ENCODE measurements at regions of chr17 and their contacts with region 1.

Region 1: GRCh38 chr17:66633317-66633965 is 201.5 kb upstream of the CACNG5 start:
- DNase-seq: peak; percentile 78
- H3K4me3 Mint-ChIP-seq: no peak overlapping the region
- H3K27ac Mint-ChIP-seq: peak overlapping the region; percentile 44
- H3K4me1 Mint-ChIP-seq: peaks cover 62% of the 10 kb centered on the region
- H3K27me3 Mint-ChIP-seq: no peaks in the 10 kb centered on the region

Region 2: DNA sequence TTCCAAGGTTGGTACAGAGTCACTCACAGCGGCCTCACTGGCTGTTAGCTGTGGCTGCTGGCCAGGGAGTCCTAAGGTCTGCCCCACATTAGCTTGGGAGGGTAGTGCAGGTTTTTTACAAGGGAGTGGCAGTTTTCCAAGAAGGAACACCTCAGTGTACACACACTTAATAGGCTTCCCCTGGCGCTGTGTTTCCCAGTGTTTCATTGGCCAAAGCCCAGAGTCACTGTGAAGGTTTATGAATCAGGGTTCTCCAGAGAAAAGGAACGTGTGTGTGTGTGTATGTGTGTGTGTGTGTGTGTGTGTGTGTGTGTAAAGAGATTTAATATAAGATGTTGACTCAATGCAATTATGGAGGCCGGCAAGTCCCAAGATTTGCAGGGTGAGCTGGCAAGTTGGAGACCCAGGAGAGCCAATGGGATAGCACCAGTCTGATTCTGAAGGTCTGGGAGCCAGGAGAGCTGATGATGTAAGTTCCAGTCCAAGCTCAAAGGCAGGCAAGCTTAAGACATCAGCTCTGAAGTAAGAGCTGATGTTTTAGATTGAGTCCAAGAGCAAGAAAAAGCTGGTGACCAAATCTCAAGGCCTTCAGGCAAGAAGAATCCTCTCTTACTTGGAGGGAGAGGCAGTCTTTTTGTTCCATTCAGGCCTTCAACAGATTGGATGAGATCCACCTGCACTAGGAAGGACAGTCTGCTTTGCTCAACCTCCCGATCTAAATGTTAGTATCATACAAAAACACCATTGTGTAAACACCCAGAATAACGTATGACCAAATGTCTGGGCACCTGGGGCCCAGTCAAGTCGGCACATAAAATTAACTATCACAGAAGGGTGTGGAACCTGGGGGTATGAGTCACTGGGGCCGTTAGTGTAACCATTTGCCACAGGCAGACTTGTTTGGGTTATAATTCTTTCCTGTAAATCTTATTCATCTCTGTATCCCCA is 124.3 kb before region 1 on chr17:
- CTCF ChIA-PET with region 1: no interaction called
- intact Hi-C with region 1: loop called (anchors 1 kb)
- DNase-seq: peak; percentile 79
- H3K4me3 Mint-ChIP-seq: peak overlapping the region; percentile 39
- H3K27ac Mint-ChIP-seq: peak overlapping the region; percentile 90
- H3K4me1 Mint-ChIP-seq: peaks cover 85% of the 10 kb centered on the region
- H3K27me3 Mint-ChIP-seq: no peaks in the 10 kb centered on the region

Region 3: GRCh38 chr17:66578781-66579489 is 54.5 kb before region 1 on chr17:
- CTCF ChIA-PET with region 1: no interaction called
- intact Hi-C with region 1: loop called (anchors 10 kb)
- DNase-seq: no peak
- H3K4me3 Mint-ChIP-seq: no peak overlapping the region
- H3K27ac Mint-ChIP-seq: no peak overlapping the region
- H3K4me1 Mint-ChIP-seq: peaks cover 29% of the 10 kb centered on the region
- H3K27me3 Mint-ChIP-seq: no peaks in the 10 kb centered on the region

Region 4: DNA sequence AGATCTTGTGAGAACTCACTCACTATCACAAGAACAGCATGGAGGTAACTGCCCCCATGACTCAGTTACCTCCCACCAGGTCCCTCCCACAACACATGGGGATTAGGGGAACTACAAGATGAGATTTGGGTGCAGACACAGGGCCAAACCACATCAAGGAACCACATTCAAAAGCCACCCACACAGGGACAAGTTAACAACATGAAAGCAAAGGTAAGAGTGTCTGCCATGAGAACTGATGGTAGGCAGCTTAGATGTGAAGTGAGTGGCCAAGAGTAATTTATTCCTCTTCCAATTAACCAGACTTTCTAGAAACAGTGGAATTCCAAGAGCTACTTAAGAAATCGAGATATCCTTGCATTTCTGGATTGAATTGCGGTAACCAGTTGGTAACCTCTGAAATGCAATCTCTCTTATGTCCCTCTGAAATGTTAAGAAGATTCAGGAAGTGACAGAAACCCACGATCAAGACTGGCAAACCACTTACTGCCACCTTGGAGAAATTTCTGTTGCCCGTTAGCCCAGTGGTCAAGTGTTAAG is 34.1 kb after region 1 on chr17:
- CTCF ChIA-PET with region 1: no interaction called
- intact Hi-C with region 1: loop called (anchors 1 kb)
- DNase-seq: peak; percentile 89
- H3K4me3 Mint-ChIP-seq: no peak overlapping the region
- H3K27ac Mint-ChIP-seq: no peak overlapping the region
- H3K4me1 Mint-ChIP-seq: peaks cover 78% of the 10 kb centered on the region
- H3K27me3 Mint-ChIP-seq: no peaks in the 10 kb centered on the region

Region 5: GRCh38 chr17:66764559-66764958 is 131.1 kb after region 1 on chr17:
- CTCF ChIA-PET with region 1: no interaction called
- intact Hi-C with region 1: no loop called
- DNase-seq: no peak
- H3K4me3 Mint-ChIP-seq: no peak overlapping the region
- H3K27ac Mint-ChIP-seq: no peak overlapping the region
- H3K4me1 Mint-ChIP-seq: peaks cover 4% of the 10 kb centered on the region
- H3K27me3 Mint-ChIP-seq: no peaks in the 10 kb centered on the region

Region 6: DNA sequence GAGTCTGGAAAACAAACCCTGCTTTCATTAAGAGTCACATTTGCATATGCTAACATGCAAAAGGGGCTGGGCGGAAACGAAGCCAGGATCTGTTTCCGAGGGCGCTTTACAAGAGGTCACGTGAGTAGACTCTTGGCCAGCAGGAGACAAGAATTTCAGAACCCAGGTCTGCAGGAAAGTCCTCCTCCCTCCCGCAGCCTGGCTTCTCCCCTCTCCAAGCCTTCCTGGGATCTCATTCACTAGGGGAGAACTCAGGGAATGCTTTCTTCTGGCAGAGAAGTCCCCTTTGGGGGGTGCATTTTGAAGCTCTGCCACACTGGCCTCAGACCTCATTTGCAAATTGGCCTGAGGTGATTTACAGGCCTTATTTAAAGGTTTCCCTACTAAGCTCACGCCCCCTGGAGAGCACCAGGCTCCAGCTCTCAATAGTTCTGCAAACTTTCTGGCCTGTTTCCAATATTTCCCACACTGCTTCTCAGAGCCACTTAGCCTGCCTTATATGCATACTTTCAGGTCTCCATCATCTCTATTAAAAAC is 144.3 kb after region 1 on chr17:
- CTCF ChIA-PET with region 1: no interaction called
- intact Hi-C with region 1: no loop called
- DNase-seq: no peak
- H3K4me3 Mint-ChIP-seq: no peak overlapping the region
- H3K27ac Mint-ChIP-seq: no peak overlapping the region
- H3K4me1 Mint-ChIP-seq: no peaks in the 10 kb centered on the region
- H3K27me3 Mint-ChIP-seq: no peaks in the 10 kb centered on the region